Esophagus muscularis mucosa (tissue), 4 donors: ENCODE measurements at regions of chr12 and their contacts with region 1.

Region 1: DNA sequence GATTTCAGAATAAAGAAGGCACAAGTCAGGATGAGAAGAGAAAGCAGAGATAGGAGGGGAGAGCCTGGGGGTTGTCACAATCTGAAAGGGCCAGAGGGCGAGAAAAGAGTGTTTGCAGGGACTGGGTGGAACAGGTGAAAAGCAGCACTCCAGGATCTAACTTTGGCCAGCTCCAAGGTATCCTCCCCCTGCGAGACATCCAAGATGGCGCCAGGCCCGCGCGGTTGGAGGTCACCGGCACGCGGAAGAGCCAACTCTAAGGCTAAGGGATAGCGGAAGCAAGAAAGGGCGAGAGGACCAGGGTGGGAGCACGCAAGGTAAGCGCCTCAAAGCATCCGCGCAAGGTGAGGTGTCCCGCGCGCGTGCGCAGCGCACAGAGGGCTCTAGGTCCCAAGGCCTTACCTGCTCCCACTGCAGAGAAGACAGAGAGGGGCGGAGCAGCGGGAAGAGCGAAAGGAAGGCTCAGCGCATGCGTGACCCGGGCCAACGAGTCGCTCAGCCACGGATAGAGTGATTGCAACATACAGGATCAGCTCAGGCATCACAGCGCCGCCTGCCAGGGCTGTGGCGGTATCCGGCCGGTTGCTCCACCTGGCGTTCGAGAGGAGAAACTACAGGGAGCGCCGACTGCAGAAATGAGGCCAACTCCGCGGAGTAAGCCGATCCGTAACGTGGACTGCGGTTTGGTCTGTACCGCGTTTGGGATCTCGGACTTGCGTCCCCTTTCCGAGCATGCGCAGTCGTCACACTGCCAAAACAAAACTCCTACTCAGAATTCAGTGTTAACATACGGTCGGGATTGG is at the start of gene ATP5MC2:
- DNase-seq: peak; percentile 99
- H3K4me3 ChIP-seq: peak within 1 kb of the TSS; percentile 69 to 86 (median 82)
- H3K27ac ChIP-seq: peak within 1 kb of the TSS; percentile 91 to 97 (median 94)
- H3K4me1 ChIP-seq: peaks cover 28 to 60% (median 56%) of the 10 kb centered on the region in 4 donors
- H3K27me3 ChIP-seq: no peaks in the 10 kb centered on the region
- CTCF ChIP-seq: peak; percentile 98 to 99 (median 99)
- EP300 ChIP-seq: no peak
- POLR2A ChIP-seq: no peak
- total RNA-seq, gene ATP5MC2: 204 to 266 (median 235) TPM

Region 2: DNA sequence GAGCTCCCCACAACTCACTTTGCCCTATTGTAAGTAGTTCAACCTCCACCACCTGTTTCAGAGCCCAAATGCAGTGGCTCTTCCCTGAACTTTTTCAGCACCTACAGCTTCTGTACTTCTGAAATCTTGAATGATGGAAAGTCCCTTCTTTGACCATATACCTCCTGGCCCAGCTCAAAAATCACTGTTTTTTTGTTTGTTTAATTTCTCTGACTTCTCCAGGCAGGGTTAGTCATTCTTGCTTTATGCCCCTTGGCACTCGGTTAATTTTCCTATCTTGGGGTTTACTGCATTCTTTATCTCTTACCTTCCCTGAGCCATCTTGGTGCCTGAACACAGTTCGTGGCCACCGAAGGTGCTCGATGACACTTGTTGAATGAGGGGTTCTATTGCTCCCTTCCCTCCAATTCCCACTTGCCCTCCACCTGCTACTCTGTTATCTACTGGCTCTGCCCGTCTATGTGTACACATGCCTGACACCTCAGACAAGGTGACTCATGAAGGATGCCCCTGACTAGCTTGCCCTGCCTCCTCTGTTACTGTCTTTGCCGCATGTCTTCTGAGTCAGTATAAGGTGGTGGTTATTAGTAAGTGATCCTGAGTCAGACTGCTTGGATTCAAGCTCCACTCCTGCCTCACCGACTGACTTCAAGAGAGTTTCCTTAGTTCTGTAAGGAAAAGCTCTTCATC is 247.8 kb before region 1 on chr12:
- intact Hi-C with region 1: no loop called
- DNase-seq: no peak
- H3K4me3 ChIP-seq: no peak overlapping the region
- H3K27ac ChIP-seq: no peak overlapping the region
- H3K4me1 ChIP-seq: no peaks in the 10 kb centered on the region
- H3K27me3 ChIP-seq: no peaks in the 10 kb centered on the region
- CTCF ChIP-seq: no peak
- EP300 ChIP-seq: no peak
- POLR2A ChIP-seq: no peak

Region 3: DNA sequence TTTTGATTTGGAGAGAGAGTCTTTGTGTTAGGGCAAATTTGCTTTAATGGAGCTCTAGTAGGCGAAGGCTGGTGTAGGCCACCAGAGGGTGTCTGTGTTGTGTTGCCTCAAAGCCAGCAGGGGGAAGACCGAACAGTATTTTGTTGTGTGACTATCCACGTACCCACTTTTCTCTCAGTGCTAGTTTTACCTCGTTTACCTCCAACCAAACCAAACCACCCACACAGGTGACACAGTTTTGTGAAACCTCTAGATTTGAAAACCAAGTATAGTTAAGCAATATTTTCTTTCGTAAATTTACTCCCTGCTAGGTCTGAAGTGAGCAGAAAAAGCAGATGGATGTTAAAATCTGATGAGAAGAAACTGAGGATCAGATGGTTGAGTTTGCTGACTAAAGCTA is 132.3 kb before region 1 on chr12:
- intact Hi-C with region 1: loop called (anchors 1 kb)
- DNase-seq: no peak
- H3K4me3 ChIP-seq: no peak overlapping the region
- H3K27ac ChIP-seq: peak overlapping the region; percentile 45 to 70 (median 68)
- H3K4me1 ChIP-seq: peaks cover 12 to 26% (median 19%) of the 10 kb centered on the region in 4 donors
- H3K27me3 ChIP-seq: no peaks in the 10 kb centered on the region
- CTCF ChIP-seq: peak; percentile 81 to 93 (median 83)
- EP300 ChIP-seq: no peak
- POLR2A ChIP-seq: no peak

Region 4: GRCh38 chr12:53625946-53626701 is 49.7 kb before region 1 on chr12 and contains the start of gene ATF7:
- intact Hi-C with region 1: loop called (anchors 5 kb)
- DNase-seq: peak; percentile 100
- H3K4me3 ChIP-seq: peak within 1 kb of the TSS; percentile 61 to 91 (median 68)
- H3K27ac ChIP-seq: peak within 1 kb of the TSS; percentile 86 to 92 (median 92)
- H3K4me1 ChIP-seq: peaks cover 32 to 52% (median 47%) of the 10 kb centered on the region in 4 donors
- H3K27me3 ChIP-seq: no peaks in the 10 kb centered on the region
- CTCF ChIP-seq: peak in 1 of 3 experiments; percentile 18
- EP300 ChIP-seq: no peak
- POLR2A ChIP-seq: no peak
- total RNA-seq, gene ATF7: 23.5 to 43.6 (median 37.1) TPM